Gastrocnemius medialis (tissue), 4 donors: ENCODE measurements at regions of chrX and their contacts with region 1.

Region 1: GRCh38 chrX:8364369-8365141 is 100.1 kb upstream of the VCX3B start:
- DNase-seq: peak; percentile 2 to 41
- ATAC-seq: peak; percentile 58 to 76
- H3K4me3 ChIP-seq: no peak overlapping the region
- H3K27ac ChIP-seq: no peak overlapping the region
- H3K4me1 ChIP-seq: no peaks in the 10 kb centered on the region
- H3K27me3 ChIP-seq: no peaks in the 10 kb centered on the region
- CTCF ChIP-seq: peak; percentile 35 to 62 (median 47)
- POLR2A ChIP-seq: no peak

Region 2: DNA sequence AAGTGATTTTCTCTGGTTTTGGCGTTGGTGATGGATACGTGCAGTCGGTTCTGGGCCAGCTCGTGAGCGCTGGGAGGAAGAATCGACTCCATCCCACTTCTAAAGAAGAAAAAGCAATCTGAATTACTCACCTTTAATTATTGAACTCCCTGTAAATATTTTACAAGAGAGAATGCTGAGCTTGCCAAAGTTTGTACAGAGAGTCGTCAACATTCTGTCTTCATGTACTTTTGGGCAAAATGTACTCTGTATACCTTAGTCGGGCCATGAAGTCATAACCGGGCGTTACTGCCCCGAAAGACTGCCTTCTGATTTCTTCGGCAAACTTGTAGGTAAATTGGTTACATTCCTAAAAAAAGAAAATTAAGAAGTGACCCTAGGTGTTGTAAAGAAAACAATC is 442.8 kb before region 1 on chrX:
- in situ Hi-C with region 1: no loop called
- intact Hi-C with region 1: no loop called
- DNase-seq: no peak
- ATAC-seq: no peak
- H3K4me3 ChIP-seq: no peak overlapping the region
- H3K27ac ChIP-seq: no peak overlapping the region
- H3K4me1 ChIP-seq: peaks cover 0 to 7% of the 10 kb centered on the region in 2 donors
- H3K27me3 ChIP-seq: no peaks in the 10 kb centered on the region
- CTCF ChIP-seq: no peak
- POLR2A ChIP-seq: no peak

Region 3: DNA sequence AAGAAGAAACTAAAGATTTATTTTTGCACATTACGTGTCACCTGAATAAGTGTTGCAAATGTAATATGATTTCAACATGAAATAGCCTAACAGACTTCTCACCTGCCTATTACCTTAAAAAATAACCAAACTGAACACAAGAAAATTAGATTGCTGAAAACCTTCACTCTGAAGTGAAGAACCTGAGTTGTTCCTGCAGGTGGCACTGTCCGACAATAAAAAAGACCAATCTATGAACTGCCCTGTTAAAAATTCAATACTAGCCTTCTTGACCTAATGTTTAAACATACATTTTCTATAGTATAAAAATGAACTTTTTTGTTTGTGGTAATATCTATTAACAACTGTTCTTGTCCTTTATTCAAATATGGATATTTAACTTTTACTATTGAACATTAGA is 368.1 kb before region 1 on chrX:
- in situ Hi-C with region 1: no loop called
- intact Hi-C with region 1: loop called (anchors 10 kb)
- DNase-seq: no peak
- ATAC-seq: peak in 1 of 2 donors; percentile 39
- H3K4me3 ChIP-seq: no peak overlapping the region
- H3K27ac ChIP-seq: no peak overlapping the region
- H3K4me1 ChIP-seq: no peaks in the 10 kb centered on the region
- H3K27me3 ChIP-seq: no peaks in the 10 kb centered on the region
- CTCF ChIP-seq: peak; percentile 38 to 54 (median 42)
- POLR2A ChIP-seq: no peak

Region 4: DNA sequence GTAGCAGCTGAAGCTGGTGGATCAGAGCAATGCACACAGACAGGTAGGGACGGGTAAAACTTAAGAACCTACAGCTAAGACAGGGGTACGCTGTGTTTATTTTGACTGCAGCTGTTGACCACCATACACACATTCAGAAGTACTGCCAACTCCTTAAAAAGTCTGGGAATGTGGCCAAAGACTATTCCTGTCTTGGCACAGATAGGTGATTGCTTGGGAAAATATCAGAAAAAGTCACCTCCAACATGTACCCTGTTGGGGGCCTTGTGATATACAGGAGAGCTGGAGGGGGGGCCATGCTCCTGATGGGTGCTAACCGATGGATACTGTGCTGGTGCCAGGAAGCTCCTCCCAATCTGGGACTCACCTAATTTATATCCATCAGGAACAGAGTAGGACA is 314.7 kb before region 1 on chrX:
- in situ Hi-C with region 1: no loop called
- intact Hi-C with region 1: no loop called
- DNase-seq: no peak
- ATAC-seq: peak; percentile 46 to 56
- H3K4me3 ChIP-seq: peak overlapping the region in 1 of 4 donors; percentile 17
- H3K27ac ChIP-seq: peak overlapping the region in 1 of 4 donors; percentile 33
- H3K4me1 ChIP-seq: peaks cover 6 to 10% of the 10 kb centered on the region in 2 donors
- H3K27me3 ChIP-seq: no peaks in the 10 kb centered on the region
- CTCF ChIP-seq: no peak
- POLR2A ChIP-seq: no peak

Region 5: GRCh38 chrX:8089141-8089540 is 275.4 kb before region 1 on chrX:
- in situ Hi-C with region 1: no loop called
- intact Hi-C with region 1: no loop called
- DNase-seq: no peak
- ATAC-seq: no peak
- H3K4me3 ChIP-seq: no peak overlapping the region
- H3K27ac ChIP-seq: no peak overlapping the region
- H3K4me1 ChIP-seq: no peaks in the 10 kb centered on the region
- H3K27me3 ChIP-seq: no peaks in the 10 kb centered on the region
- CTCF ChIP-seq: no peak
- POLR2A ChIP-seq: no peak

Region 6: DNA sequence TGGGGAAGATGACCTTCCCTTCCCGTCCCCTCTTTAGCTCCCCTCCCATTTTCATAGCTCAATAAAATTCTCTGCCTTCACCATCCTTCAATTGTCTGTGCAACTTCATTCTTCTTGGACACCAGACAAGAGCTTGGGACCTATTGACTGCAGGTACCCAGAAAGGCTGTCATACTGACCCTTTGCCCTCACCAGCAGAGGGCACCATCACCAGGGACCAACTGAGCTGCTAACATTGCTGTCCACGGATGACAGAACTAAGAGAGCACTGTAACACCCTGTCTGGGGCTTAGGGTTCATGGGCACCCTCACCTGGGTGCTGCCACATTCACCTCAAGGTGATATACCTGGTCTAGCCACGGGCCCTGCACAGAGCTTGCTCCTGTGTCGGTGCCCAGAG is 41.2 kb before region 1 on chrX:
- in situ Hi-C with region 1: no loop called
- intact Hi-C with region 1: loop called (anchors 1 kb)
- DNase-seq: no peak
- ATAC-seq: no peak
- H3K4me3 ChIP-seq: no peak overlapping the region
- H3K27ac ChIP-seq: no peak overlapping the region
- H3K4me1 ChIP-seq: no peaks in the 10 kb centered on the region
- H3K27me3 ChIP-seq: no peaks in the 10 kb centered on the region
- CTCF ChIP-seq: no peak
- POLR2A ChIP-seq: no peak

Region 7: DNA sequence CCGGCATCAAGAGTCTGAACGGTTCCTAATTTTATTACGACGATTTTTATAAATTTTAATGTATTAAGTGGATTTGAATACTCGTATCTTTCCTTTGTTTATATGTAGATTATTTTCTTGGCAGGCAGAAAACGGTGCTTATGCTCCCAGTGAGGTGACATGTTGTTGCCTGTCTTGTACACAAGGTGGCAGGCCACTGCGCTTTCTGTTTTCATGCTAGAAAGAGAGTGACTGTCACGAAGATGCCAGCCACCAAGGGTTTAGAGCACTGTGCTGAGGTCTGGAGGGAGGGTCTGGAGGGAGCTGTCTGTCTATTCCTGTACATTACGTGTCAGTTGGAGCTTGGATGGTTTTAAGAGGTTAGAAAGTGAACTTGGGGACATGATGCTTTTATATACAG is 1509.4 kb after region 1 on chrX:
- in situ Hi-C with region 1: no loop called
- intact Hi-C with region 1: no loop called
- DNase-seq: no peak
- ATAC-seq: no peak
- H3K4me3 ChIP-seq: no peak overlapping the region
- H3K27ac ChIP-seq: no peak overlapping the region
- H3K4me1 ChIP-seq: no peaks in the 10 kb centered on the region
- H3K27me3 ChIP-seq: no peaks in the 10 kb centered on the region
- CTCF ChIP-seq: peak in 2 of 5 experiments; percentile 36 to 41
- POLR2A ChIP-seq: no peak